Activated CD8-positive, alpha-beta memory T cell treated with anti-CD3 and anti-CD28 coated beads, Interleukin-2, amount 10 ng/mL, durations not matched to agents 7 days and 5 days (primary cell): ENCODE measurements at regions of chr3 and their contacts with region 1.

Region 1: GRCh38 chr3:15051531-15051930 is 13.6 kb downstream of the MRPS25 start:
- DNase-seq: peak; percentile 67
- ATAC-seq: peak; percentile 78
- H3K4me3 Mint-ChIP-seq: no peak overlapping the region
- H3K27ac Mint-ChIP-seq: no peak overlapping the region
- H3K4me1 Mint-ChIP-seq: peaks cover 31% of the 10 kb centered on the region
- H3K27me3 Mint-ChIP-seq: no peaks in the 10 kb centered on the region

Region 2: DNA sequence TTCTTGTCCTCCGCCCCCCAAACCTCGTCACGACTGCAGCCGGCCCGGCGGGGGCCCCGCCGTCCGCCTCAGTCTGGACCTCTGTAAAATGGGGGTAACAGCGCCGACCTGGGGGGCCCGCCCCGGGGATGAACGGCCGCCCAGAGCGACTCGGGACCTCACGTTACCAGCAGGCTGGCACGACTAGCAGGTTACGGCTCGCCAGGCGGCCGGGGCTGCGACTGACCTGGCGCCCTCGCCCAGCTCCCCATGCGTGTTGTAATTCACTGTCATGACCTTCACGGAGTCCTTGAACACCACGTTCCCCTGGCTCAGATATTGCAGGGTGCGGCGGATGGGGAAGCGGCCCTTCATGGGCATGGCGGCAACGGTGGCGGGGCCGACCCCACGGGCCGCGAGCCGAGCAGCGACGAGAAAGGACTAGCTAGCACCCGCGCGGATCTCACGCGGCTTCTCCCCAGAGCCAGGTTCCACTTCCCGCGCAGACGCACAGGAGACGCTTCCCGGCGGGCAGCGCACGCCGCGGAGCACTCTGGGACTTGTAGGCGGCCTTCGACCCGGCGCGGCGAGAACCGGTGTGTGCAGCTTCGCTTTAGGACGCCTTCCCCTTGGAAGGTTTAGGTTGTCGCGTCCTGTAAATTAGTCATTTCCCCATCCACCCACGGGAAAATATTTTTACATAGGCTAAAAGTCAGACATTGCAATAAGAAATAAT is 13.5 kb after region 1 on chr3 and contains the start of gene MRPS25:
- CTCF ChIA-PET with region 1: interaction called, 14 read pairs
- DNase-seq: peak; percentile 94
- ATAC-seq: peak; percentile 99
- H3K4me3 Mint-ChIP-seq: peak within 1 kb of the TSS; percentile 96
- H3K27ac Mint-ChIP-seq: peak within 1 kb of the TSS; percentile 96
- H3K4me1 Mint-ChIP-seq: peaks cover 26% of the 10 kb centered on the region
- H3K27me3 Mint-ChIP-seq: no peaks in the 10 kb centered on the region
- total RNA-seq, gene MRPS25: 65.3 to 66.9 TPM